CD14-positive monocyte (primary cell): ENCODE measurements at regions of chr22 and their contacts with region 1.

Region 1: DNA sequence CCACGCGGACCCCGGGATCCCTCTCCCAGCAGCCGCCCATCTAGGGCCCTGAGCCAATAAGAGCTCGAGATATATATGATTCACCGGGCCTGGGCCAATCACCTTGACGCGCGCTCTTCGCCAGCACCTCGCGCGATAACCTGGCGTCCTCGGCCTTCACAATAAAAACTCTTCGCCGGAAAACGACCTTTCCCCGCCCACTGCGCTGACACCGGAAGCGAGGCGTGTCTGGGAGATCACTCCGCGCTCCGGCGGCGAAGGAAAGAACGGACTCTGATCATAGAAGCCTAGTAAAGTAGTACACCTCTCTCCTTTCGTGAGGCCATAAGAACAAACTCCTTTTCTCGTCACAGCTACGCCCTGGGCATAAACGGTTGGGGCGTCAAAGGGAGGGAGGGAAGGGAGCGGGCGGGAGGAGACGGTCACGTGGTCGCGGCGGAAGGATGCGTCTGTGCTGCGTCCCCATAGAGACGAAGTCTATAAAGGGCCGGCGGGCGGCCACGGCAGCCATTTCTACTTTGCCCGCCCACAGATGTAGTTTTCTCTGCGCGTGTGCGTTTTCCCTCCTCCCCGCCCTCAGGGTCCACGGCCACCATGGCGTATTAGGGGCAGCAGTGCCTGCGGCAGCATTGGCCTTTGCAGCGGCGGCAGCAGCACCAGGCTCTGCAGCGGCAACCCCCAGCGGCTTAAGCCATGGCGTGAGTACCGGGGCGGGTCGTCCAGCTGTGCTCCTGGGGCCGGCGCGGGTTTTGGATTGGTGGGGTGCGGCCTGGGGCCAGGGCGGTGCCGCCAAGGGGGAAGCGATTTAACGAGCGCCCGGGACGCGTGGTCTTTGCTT is at the start of gene ATF4:
- DNase-seq: peak; percentile 98 to 99 (median 99)
- H3K4me3 ChIP-seq: peak within 1 kb of the TSS; percentile 88 to 98 (median 96)
- H3K4me3 Mint-ChIP-seq: peak within 1 kb of the TSS; percentile 90 to 92
- H3K27ac ChIP-seq: peak within 1 kb of the TSS; percentile 95 to 96
- H3K27ac Mint-ChIP-seq: peak within 1 kb of the TSS; percentile 97 to 100 (median 99)
- H3K4me1 ChIP-seq: peaks cover 52 to 57% of the 10 kb centered on the region in 2 donors
- H3K4me1 Mint-ChIP-seq: peaks cover 54% of the 10 kb centered on the region
- H3K27me3 ChIP-seq: no peaks in the 10 kb centered on the region
- H3K27me3 Mint-ChIP-seq: peaks cover 0 to 7% (median 0%) of the 10 kb centered on the region in 3 donors
- CTCF ChIP-seq: no peak
- polyA plus RNA-seq, gene ATF4: 55.1 to 606 (median 59.0) TPM

Region 2: GRCh38 chr22:38755911-38756532 is 764.3 kb before region 1 on chr22 and contains the start of gene SUN2:
- intact Hi-C with region 1: loop called in 1 of 2 experiments (anchors 10 kb)
- DNase-seq: peak; percentile 89 to 90 (median 90)
- H3K4me3 ChIP-seq: peak within 1 kb of the TSS; percentile 88 to 98 (median 92)
- H3K4me3 Mint-ChIP-seq: peak within 1 kb of the TSS; percentile 93 to 97
- H3K27ac ChIP-seq: peak within 1 kb of the TSS; percentile 99 to 100
- H3K27ac Mint-ChIP-seq: peak within 1 kb of the TSS; percentile 98 to 100 (median 99)
- H3K4me1 ChIP-seq: peaks cover 64 to 70% of the 10 kb centered on the region in 2 donors
- H3K4me1 Mint-ChIP-seq: peaks cover 68% of the 10 kb centered on the region
- H3K27me3 ChIP-seq: no peaks in the 10 kb centered on the region
- H3K27me3 Mint-ChIP-seq: peaks cover 0 to 3% (median 0%) of the 10 kb centered on the region in 3 donors
- CTCF ChIP-seq: no peak
- polyA plus RNA-seq, gene SUN2: 95.8 to 159 (median 97.8) TPM

Region 3: DNA sequence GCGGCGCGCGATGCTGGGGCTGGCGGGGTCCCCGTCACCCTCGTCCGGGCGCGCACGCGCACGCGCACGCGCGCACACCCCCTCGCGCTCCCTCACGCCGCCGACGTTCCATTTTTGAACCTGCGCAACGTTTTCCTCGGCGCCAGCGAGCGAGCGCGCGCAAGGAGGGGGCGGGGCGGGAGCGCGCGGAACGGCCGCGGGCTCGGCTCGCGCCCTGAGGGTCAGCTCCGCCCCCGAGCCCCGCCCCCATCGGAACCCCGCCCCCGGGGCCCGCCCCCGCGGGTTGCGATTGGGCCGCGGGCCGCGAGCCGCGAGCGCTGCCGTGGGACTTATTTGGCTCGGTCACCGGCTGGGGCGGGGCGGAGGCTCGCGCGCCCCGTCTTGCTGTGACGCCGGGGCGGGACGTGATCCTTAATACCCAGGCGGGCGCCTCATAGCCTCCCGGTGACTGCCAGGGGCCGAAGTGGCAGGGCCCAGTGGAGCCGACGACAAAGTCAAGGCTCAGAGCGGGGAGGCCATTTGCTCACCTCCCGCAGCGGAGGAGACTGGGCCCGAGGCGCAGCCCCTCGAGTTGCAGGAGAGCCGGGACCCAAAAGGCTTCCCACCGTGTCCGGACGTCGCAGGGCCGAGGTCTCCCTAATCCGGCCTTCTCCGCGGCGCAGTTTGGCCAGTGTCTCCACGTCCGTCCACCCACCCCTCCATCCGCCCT is 367.6 kb before region 1 on chr22 and contains the start of gene CBX7:
- intact Hi-C with region 1: loop called in 1 of 2 experiments (anchors 5 kb)
- DNase-seq: peak; percentile 87 to 91 (median 89)
- H3K4me3 ChIP-seq: peak within 1 kb of the TSS; percentile 64 to 86 (median 84)
- H3K4me3 Mint-ChIP-seq: peak within 1 kb of the TSS; percentile 80 to 90
- H3K27ac ChIP-seq: peak within 1 kb of the TSS in 1 of 2 donors; percentile 56
- H3K27ac Mint-ChIP-seq: peak within 1 kb of the TSS in 6 of 7 donors; percentile 37 to 84 (median 72)
- H3K4me1 ChIP-seq: peaks cover 18 to 25% of the 10 kb centered on the region in 2 donors
- H3K4me1 Mint-ChIP-seq: peaks cover 25% of the 10 kb centered on the region
- H3K27me3 ChIP-seq: peaks cover 19 to 35% of the 10 kb centered on the region in 2 donors
- H3K27me3 Mint-ChIP-seq: peaks cover 36 to 44% (median 38%) of the 10 kb centered on the region in 3 donors
- CTCF ChIP-seq: no peak
- polyA plus RNA-seq, gene CBX7: 3.1 to 18.0 (median 4.0) TPM

Region 4: DNA sequence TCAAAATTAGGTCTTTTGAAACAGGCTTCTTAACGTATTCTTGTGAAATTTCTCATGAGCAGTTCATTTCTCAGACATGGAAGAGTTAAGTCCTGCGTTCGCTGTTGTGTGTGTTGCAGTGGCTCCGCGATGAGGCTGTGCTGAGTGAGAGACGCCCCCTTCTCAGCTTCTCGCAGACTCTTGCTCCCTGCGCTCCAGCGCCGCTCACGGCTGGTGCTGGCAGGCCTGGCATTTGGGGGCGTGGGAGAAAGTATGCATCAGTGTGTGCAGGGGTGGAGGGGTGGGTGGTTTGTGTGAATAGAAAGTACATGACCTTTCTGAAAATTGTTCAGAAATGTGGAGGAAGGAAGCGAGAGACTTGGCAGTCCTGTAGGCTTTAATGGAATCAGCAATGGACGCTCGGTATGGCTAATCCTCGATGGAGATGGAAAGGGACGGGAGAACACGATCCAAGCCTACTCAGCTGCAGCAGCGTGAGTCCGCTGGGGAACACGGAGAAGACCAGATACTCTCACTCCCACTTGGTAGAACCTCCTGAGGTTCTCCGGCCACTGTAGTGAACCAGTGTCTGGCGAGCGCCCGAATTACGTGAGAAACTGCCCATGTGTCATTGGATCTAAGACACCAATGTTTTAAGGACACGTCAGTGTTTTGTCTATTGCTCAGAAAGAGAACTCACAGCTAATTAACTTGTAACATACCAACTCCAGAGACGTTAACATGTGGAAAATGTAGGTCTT is 114.8 kb before region 1 on chr22:
- intact Hi-C with region 1: loop called (anchors 10 kb)
- DNase-seq: no peak
- H3K4me3 ChIP-seq: no peak overlapping the region
- H3K4me3 Mint-ChIP-seq: no peak overlapping the region
- H3K27ac ChIP-seq: peak overlapping the region in 1 of 2 donors; percentile 7
- H3K27ac Mint-ChIP-seq: peak overlapping the region in 1 of 7 donors; percentile 52
- H3K4me1 ChIP-seq: peaks cover 39 to 48% of the 10 kb centered on the region in 2 donors
- H3K4me1 Mint-ChIP-seq: peaks cover 69% of the 10 kb centered on the region
- H3K27me3 ChIP-seq: no peaks in the 10 kb centered on the region
- H3K27me3 Mint-ChIP-seq: no peaks in the 10 kb centered on the region
- CTCF ChIP-seq: no peak

Region 5: GRCh38 chr22:39482768-39483167 is 37.5 kb before region 1 on chr22:
- intact Hi-C with region 1: no loop called
- DNase-seq: no peak
- H3K4me3 ChIP-seq: no peak overlapping the region
- H3K4me3 Mint-ChIP-seq: no peak overlapping the region
- H3K27ac ChIP-seq: no peak overlapping the region
- H3K27ac Mint-ChIP-seq: no peak overlapping the region
- H3K4me1 ChIP-seq: no peaks in the 10 kb centered on the region
- H3K4me1 Mint-ChIP-seq: no peaks in the 10 kb centered on the region
- H3K27me3 ChIP-seq: no peaks in the 10 kb centered on the region
- H3K27me3 Mint-ChIP-seq: peaks cover 3 to 4% (median 4%) of the 10 kb centered on the region in 3 donors
- CTCF ChIP-seq: no peak

Region 6: GRCh38 chr22:39502109-39502788 is 18.0 kb before region 1 on chr22 and contains the start of gene MIEF1:
- intact Hi-C with region 1: loop called in 1 of 2 experiments (anchors 2 kb)
- DNase-seq: peak; percentile 96 to 98 (median 97)
- H3K4me3 ChIP-seq: peak within 1 kb of the TSS; percentile 59 to 94 (median 75)
- H3K4me3 Mint-ChIP-seq: peak within 1 kb of the TSS; percentile 93 to 97
- H3K27ac ChIP-seq: peak within 1 kb of the TSS; percentile 44 to 88
- H3K27ac Mint-ChIP-seq: peak within 1 kb of the TSS; percentile 88 to 95 (median 93)
- H3K4me1 ChIP-seq: peaks cover 15 to 24% of the 10 kb centered on the region in 2 donors
- H3K4me1 Mint-ChIP-seq: peaks cover 29% of the 10 kb centered on the region
- H3K27me3 ChIP-seq: no peaks in the 10 kb centered on the region
- H3K27me3 Mint-ChIP-seq: peaks cover 0 to 5% (median 3%) of the 10 kb centered on the region in 3 donors
- CTCF ChIP-seq: no peak
- polyA plus RNA-seq, gene MIEF1: 9.4 to 14.0 (median 13.3) TPM

Region 7: GRCh38 chr22:39612811-39613548 is 92.7 kb after region 1 on chr22:
- intact Hi-C with region 1: no loop called
- DNase-seq: no peak
- H3K4me3 ChIP-seq: no peak overlapping the region
- H3K4me3 Mint-ChIP-seq: no peak overlapping the region
- H3K27ac ChIP-seq: no peak overlapping the region
- H3K27ac Mint-ChIP-seq: no peak overlapping the region
- H3K4me1 ChIP-seq: no peaks in the 10 kb centered on the region
- H3K4me1 Mint-ChIP-seq: peaks cover 2% of the 10 kb centered on the region
- H3K27me3 ChIP-seq: peaks cover 0 to 2% of the 10 kb centered on the region in 2 donors
- H3K27me3 Mint-ChIP-seq: peaks cover 25 to 47% (median 30%) of the 10 kb centered on the region in 3 donors
- CTCF ChIP-seq: no peak